ENCODE measurements at regions of chr14 and their contacts with region 1.

Region 1: DNA sequence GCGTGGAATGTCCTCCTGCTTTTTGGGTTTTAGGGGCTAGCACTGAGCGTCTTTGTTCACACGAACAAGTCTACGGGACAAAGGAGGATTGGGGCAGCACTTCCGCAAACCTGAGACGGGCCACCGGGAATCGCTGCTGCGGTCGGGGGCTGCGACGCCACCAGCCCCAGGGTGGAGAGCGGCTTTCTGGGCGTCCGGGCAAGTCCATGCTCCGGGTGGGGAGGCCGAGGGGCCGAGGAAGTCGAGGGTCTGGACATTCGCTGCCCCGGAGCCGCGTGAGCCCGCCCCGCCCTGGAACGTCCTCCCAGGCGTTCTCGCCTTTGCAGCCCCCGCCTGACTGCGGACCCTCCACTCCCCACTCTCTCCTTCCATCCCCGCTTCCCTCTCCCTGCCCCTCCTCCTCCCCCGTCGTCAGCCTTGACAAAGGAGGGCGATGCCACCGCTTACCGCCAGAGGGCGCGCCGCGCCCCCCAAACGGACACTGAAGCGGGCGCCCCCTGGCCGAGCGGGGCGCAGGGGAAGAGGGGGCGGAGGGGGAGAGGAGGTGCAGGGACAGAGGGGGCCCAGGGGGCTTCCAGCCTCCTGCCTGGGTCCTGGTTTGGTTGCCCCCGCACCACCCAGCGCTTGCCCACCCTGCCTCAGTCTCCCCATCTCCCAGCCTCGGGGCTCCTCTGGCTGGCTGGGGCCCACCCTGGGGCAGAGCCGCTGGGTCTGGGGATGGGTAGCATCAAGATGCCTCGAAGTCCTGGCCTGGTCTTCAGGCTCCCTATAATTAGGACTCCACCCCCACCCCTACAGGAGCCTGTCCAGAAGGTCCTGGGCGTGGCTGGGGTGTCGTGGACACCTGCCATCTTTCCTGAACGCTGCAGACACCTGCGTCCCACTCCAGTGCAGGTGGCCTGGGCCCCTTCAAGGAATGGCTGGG is 39.1 kb upstream of the INF2 start:
- DNase-seq: peak; percentile 69
- ATAC-seq: peak; percentile 85
- H3K4me3 ChIP-seq: peak overlapping the region; percentile 47
- H3K27ac ChIP-seq: no peak overlapping the region
- H3K4me1 ChIP-seq: peaks cover 7% of the 10 kb centered on the region
- H3K27me3 ChIP-seq: no peaks in the 10 kb centered on the region
- CTCF ChIP-seq: peak; percentile 93

Region 2: GRCh38 chr14:104708606-104709268 is 58.4 kb after region 1 on chr14:
- intact Hi-C with region 1: loop called (anchors 10 kb)
- DNase-seq: peak; percentile 79
- ATAC-seq: peak; percentile 80 to 85
- H3K4me3 ChIP-seq: no peak overlapping the region
- H3K27ac ChIP-seq: no peak overlapping the region
- H3K4me1 ChIP-seq: peaks cover 7% of the 10 kb centered on the region
- H3K27me3 ChIP-seq: no peaks in the 10 kb centered on the region
- CTCF ChIP-seq: peak; percentile 99

Region 3: DNA sequence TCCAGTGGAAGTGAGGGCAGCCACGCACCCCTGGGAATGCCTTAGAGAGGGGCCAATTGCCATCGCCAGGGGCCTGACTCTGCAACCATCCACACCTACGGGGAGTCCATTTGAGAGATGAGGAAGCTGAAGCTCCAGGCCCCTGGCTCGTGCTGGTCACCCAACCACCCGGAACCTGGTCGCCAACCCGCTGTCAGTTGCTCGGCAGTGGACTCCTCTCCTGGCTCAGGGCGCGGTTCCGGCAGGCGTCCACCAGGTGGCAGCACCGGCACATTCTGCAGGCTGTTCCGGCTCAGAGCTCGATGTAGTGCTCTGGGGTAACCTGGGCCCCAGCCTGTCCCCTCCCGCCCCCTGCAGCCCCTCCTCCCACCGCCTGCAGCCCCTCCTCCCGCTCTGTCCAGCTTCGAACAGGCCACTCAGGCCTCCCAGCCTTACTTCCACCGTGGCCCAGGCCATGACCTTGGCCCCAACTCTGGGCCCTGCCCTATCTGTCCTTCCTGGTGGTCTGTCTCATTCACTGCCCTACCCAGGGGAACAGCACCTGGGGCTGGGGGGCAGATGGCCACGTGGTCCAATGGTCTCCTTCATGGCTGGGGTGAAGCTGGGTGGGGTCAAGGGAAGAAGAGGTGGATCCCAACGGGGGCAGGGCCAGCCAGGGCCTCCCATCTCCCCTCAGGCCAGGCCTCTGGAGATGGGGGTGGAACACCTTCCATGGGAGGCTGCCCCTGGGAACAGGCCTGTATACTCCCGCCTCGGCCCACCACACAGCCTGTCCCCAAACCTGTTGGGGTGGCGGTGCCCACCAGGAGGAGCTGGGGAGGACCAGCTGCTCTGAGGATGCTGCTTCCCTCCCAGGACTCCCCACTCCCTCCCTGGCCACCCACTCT is 118.4 kb after region 1 on chr14:
- intact Hi-C with region 1: no loop called
- DNase-seq: peak; percentile 92
- ATAC-seq: peak; percentile 94
- H3K4me3 ChIP-seq: no peak overlapping the region
- H3K27ac ChIP-seq: peak overlapping the region; percentile 27
- H3K4me1 ChIP-seq: peaks cover 20% of the 10 kb centered on the region
- H3K27me3 ChIP-seq: no peaks in the 10 kb centered on the region
- CTCF ChIP-seq: peak; percentile 98